Kidney (tissue), 22 donors: ENCODE measurements at regions of chr17 and their contacts with region 1.

Region 1: GRCh38 chr17:47840740-47841603 is at the start of gene SCRN2:
- DNase-seq: peak; percentile 94 to 97 (median 95)
- H3K4me3 ChIP-seq: peak within 1 kb of the TSS; percentile 68 to 91 (median 83)
- H3K27ac ChIP-seq: peak within 1 kb of the TSS; percentile 61 to 74
- H3K4me1 ChIP-seq: peaks cover 0 to 33% (median 28%) of the 10 kb centered on the region in 3 donors
- H3K27me3 ChIP-seq: no peaks in the 10 kb centered on the region
- CTCF ChIP-seq: peak; percentile 98
- total RNA-seq, gene SCRN2: 40.3 TPM

Region 2: GRCh38 chr17:47742319-47743181 is 98.4 kb before region 1 on chr17:
- intact Hi-C with region 1: no loop called
- DNase-seq: peak in 4 of 5 donors; percentile 46 to 72 (median 66)
- H3K4me3 ChIP-seq: no peak overlapping the region
- H3K27ac ChIP-seq: no peak overlapping the region
- H3K4me1 ChIP-seq: no peaks in the 10 kb centered on the region
- H3K27me3 ChIP-seq: no peaks in the 10 kb centered on the region
- CTCF ChIP-seq: peak; percentile 39

Region 3: DNA sequence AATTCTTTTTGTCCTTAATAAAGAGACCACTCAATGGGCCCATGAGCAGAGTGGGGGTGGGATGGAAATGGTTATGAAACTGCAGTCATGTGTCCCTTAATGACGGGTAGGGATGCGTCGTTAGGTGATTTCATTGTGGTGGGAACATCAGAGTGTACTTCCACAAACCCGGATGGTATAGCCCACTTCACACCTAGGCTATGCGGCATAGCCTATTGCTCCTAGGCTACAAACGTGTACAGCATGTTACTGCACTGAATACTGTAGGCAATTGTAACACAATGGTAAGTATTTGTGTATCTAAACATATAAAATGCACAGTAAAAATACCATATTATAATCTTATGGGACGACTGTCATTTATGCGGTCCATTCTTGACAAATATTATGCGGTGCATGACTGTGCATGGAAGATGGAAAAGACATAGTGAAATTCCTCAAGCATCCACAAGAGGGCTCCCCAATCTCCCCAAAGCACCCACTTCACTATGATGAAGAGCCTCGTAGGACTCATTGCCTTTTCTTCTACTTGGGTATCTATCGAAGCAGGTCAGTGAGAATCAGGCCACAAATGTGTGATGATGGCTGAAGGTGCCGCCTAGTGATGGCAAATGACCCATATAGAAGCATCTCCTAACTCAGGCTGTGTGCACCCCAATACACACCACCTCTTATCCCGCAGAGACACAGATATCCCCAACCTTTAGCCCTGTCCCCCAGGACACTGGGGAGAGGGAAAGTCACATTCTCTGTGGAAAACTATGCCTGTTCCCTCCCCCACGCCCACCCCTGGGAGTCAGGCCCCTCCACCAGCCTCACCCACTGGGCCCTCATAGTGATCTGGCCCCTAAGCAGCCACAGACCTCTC is 64.4 kb before region 1 on chr17:
- intact Hi-C with region 1: no loop called
- DNase-seq: peak in 3 of 5 donors; percentile 21 to 43 (median 32)
- H3K4me3 ChIP-seq: no peak overlapping the region
- H3K27ac ChIP-seq: no peak overlapping the region
- H3K4me1 ChIP-seq: no peaks in the 10 kb centered on the region
- H3K27me3 ChIP-seq: peaks cover 6% of the 10 kb centered on the region
- CTCF ChIP-seq: peak; percentile 63

Region 4: DNA sequence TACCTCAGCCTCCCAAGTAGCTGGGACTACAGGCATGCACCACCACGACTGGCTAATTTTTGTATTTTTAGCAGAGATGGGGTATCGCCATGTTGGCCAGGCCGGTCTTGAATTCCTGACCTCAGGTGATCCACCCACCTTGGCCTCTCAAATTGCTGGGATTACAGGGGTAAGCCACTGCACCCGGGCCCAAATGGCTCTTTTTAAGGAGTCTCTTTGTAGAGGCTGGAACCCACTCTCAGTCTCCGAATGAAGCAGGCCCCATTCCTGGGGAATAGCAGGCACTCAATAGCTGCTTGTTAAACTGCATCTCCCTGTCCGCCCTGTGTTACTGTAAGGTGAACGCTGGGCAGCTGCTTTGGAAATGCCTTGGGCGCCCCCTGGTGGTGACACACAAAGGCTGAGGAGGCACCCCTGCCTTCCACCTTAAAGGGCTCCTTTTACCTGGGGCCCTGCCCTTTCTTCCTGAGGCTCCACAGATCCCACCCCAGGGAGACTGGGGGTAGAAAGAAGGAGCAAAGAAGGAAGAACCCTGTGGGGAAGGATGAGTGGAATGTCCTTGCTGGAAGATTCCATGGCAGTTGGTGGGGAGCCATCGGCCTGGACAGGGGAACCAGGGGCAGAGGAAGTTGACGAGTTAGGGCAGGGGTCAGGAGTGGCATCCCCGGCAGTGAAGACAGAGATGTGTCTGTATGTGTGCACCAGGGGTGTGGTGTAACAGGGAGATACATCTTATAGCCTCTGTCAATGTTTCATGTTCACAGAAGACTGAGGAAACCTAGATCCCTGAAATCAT is 49.0 kb after region 1 on chr17:
- intact Hi-C with region 1: loop called (anchors 5 kb)
- DNase-seq: peak; percentile 86 to 94 (median 91)
- H3K4me3 ChIP-seq: no peak overlapping the region
- H3K27ac ChIP-seq: no peak overlapping the region
- H3K4me1 ChIP-seq: peaks cover 0 to 12% (median 7%) of the 10 kb centered on the region in 3 donors
- H3K27me3 ChIP-seq: no peaks in the 10 kb centered on the region
- CTCF ChIP-seq: peak; percentile 90

Region 5: DNA sequence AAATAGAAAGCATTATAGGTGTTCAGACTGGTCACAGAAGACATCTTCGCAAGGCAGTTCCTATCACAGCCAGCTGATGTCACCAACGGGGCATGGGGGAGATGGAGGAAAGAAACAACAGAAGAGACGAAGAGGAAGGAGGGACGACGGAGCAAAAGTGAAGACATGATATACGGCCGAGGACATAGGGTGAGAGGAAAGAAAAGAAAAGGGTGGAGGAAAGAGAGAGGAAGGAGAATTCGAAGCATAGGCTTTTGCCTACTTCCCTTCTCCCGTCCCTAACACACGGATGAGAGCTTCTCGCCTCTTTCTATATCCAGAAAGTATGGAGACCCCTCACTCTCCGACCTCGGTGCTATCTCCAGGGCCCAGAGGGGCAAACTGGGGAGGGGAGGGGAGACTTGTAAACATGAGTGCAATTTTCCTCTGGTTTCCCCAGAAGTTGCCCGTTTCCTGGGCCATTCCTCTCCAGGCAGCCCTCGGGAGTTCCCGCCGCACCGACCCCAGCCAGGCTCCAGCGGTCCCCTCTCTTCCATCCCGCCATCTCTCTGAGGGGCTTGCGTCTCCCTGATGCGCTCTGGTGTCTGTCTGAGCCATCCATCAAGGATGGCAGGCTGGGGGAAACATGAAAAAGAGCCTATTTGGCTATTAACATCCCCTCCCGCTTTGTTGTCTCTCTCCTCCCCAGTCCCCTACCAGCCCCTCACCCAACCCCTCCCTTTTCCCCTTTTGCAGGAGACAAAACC is 170.6 kb after region 1 on chr17:
- intact Hi-C with region 1: loop called (anchors 10 kb)
- DNase-seq: peak in 3 of 5 donors; percentile 24 to 64 (median 56)
- H3K4me3 ChIP-seq: peak overlapping the region in 2 of 3 donors; percentile 3 to 45
- H3K27ac ChIP-seq: no peak overlapping the region
- H3K4me1 ChIP-seq: peaks cover 0 to 2% (median 2%) of the 10 kb centered on the region in 3 donors
- H3K27me3 ChIP-seq: no peaks in the 10 kb centered on the region
- CTCF ChIP-seq: peak; percentile 42